Left cardiac atrium (tissue), 4 donors: ENCODE measurements at regions of chr18 and their contacts with region 1.

Region 1: GRCh38 chr18:79400091-79400590 is 4.4 kb downstream of the NFATC1 start:
- DNase-seq: peak; percentile 82
- ATAC-seq: peak; percentile 31 to 48

Region 2: DNA sequence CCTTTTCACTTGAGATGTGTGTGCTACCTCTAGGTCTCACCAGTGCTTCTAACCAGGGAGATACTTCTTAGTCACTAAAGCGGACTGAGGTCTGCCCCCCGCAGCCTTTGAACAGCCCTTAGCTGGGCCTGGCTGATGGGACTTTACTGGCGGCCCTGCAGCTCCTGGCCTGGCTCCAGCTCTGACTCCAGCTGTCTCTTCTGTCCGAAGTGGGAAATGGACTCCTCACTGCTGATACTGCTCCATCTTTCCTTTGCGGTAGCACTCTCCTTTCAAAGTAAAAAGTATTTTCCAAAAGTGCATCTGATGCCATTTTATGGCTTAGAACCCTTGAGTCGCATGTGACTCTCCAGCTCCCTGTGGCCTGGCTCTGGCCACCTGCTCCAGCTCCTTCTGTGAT is 266.4 kb before region 1 on chr18:
- intact Hi-C with region 1: no loop called
- DNase-seq: no peak
- ATAC-seq: no peak

Region 3: GRCh38 chr18:79458131-79458838 is 58.1 kb after region 1 on chr18:
- intact Hi-C with region 1: loop called in 1 of 2 experiments (anchors 5 kb)
- DNase-seq: peak; percentile 88
- ATAC-seq: peak; percentile 83 to 89